Calu3 (cell line): ENCODE measurements at regions of chr1 and their contacts with region 1.

Region 1: GRCh38 chr1:114757455-114758250 is at the start of gene CSDE1:
- DNase-seq: peak; percentile 91
- H3K4me3 Mint-ChIP-seq: peak within 1 kb of the TSS; percentile 95
- H3K27ac Mint-ChIP-seq: peak within 1 kb of the TSS; percentile 99
- H3K4me1 Mint-ChIP-seq: peaks cover 15% of the 10 kb centered on the region
- H3K27me3 Mint-ChIP-seq: no peaks in the 10 kb centered on the region
- CTCF ChIP-seq: no peak
- total RNA-seq, gene CSDE1: 333 and 362 TPM in 2 replicates

Region 2: GRCh38 chr1:114636390-114636789 is 121.3 kb before region 1 on chr1:
- CTCF ChIA-PET with region 1: no interaction called
- intact Hi-C with region 1: no loop called
- DNase-seq: no peak
- H3K4me3 Mint-ChIP-seq: no peak overlapping the region
- H3K27ac Mint-ChIP-seq: no peak overlapping the region
- H3K4me1 Mint-ChIP-seq: no peaks in the 10 kb centered on the region
- H3K27me3 Mint-ChIP-seq: no peaks in the 10 kb centered on the region
- CTCF ChIP-seq: no peak

Region 3: GRCh38 chr1:114719424-114719787 is 38.2 kb before region 1 on chr1:
- CTCF ChIA-PET with region 1: no interaction called
- intact Hi-C with region 1: no loop called
- DNase-seq: no peak
- H3K4me3 Mint-ChIP-seq: no peak overlapping the region
- H3K27ac Mint-ChIP-seq: no peak overlapping the region
- H3K4me1 Mint-ChIP-seq: no peaks in the 10 kb centered on the region
- H3K27me3 Mint-ChIP-seq: no peaks in the 10 kb centered on the region
- CTCF ChIP-seq: no peak

Region 4: DNA sequence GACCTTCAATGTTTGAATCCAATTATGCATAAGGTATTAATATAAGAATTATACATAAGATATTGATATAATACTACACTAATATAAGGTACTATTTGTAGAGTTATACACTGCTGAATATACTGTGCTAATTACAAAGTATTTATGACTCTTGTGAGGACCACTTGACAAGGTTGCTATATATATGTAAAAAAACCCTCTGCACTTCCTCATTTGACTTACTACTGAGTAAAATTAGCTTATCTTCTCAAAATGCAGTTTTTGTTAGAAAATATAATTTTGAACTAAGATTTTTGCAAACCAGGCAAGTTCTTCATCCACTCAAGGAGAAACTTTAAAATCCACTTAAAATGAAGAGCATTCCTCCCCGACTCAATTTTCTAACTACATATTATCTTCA is 14.3 kb after region 1 on chr1:
- CTCF ChIA-PET with region 1: interaction called, 15 read pairs
- intact Hi-C with region 1: no loop called
- DNase-seq: no peak
- H3K4me3 Mint-ChIP-seq: no peak overlapping the region
- H3K27ac Mint-ChIP-seq: no peak overlapping the region
- H3K4me1 Mint-ChIP-seq: no peaks in the 10 kb centered on the region
- H3K27me3 Mint-ChIP-seq: no peaks in the 10 kb centered on the region
- CTCF ChIP-seq: no peak